ENCODE measurements at regions of chr2 and their contacts with region 1.

Region 1: GRCh38 chr2:106104332-106105062 is 89.6 kb downstream of the UXS1 start:
- DNase-seq: no peak
- ATAC-seq: peak; percentile 40
- H3K4me3 Mint-ChIP-seq: no peak overlapping the region
- H3K27ac Mint-ChIP-seq: no peak overlapping the region
- H3K4me1 Mint-ChIP-seq: peaks cover 2% of the 10 kb centered on the region
- H3K27me3 Mint-ChIP-seq: no peaks in the 10 kb centered on the region
- CTCF ChIP-seq: peak; percentile 75

Region 2: GRCh38 chr2:106160786-106161261 is 56.3 kb after region 1 on chr2:
- CTCF ChIA-PET with region 1: interaction called, 6 read pairs
- POLR2A ChIA-PET with region 1: interaction called, 10 read pairs
- intact Hi-C with region 1: loop called (anchors 1 kb)
- DNase-seq: no peak
- ATAC-seq: peak; percentile 74
- H3K4me3 Mint-ChIP-seq: peak overlapping the region; percentile 88
- H3K27ac Mint-ChIP-seq: peak overlapping the region; percentile 89
- H3K4me1 Mint-ChIP-seq: peaks cover 75% of the 10 kb centered on the region
- H3K27me3 Mint-ChIP-seq: no peaks in the 10 kb centered on the region
- CTCF ChIP-seq: no peak

Region 3: DNA sequence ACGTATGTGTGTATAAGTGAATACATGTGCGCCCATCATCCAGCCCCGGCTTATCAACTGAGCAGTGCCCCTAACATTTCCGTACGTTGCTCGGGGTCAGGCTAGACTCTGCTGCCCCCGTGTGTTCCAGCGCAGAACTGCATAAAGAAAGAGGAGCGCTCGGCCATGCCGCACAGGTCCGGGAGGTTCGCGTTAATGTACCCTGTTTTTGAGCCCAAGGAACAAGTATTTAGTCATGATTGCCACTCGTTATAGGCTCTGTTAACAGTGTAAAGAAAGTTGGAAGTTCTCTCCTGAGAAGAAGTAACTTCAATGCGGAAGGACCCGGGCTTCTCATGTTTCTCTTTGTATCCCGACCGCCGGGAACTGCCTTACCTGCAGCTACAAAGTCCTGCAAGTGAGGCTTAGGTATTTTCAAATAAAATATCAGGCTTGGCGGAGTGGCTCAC is 438.3 kb after region 1 on chr2:
- CTCF ChIA-PET with region 1: interaction called, 23 read pairs
- POLR2A ChIA-PET with region 1: no interaction called
- intact Hi-C with region 1: loop called (anchors 1 kb)
- DNase-seq: peak; percentile 66
- ATAC-seq: peak; percentile 95
- H3K4me3 Mint-ChIP-seq: peak overlapping the region; percentile 58
- H3K27ac Mint-ChIP-seq: no peak overlapping the region
- H3K4me1 Mint-ChIP-seq: peaks cover 2% of the 10 kb centered on the region
- H3K27me3 Mint-ChIP-seq: peaks cover 21% of the 10 kb centered on the region
- CTCF ChIP-seq: peak; percentile 98

Region 4: GRCh38 chr2:106582148-106583143 is 477.9 kb after region 1 on chr2:
- CTCF ChIA-PET with region 1: interaction called, 13 read pairs
- POLR2A ChIA-PET with region 1: no interaction called
- intact Hi-C with region 1: loop called (anchors 1 kb)
- DNase-seq: peak; percentile 37
- ATAC-seq: peak; percentile 83
- H3K4me3 Mint-ChIP-seq: peak overlapping the region; percentile 86
- H3K27ac Mint-ChIP-seq: no peak overlapping the region
- H3K4me1 Mint-ChIP-seq: peaks cover 11% of the 10 kb centered on the region
- H3K27me3 Mint-ChIP-seq: peaks cover 27% of the 10 kb centered on the region
- CTCF ChIP-seq: peak; percentile 89